Activated CD8-positive, alpha-beta T cell treated with anti-CD3 and anti-CD28 coated beads for 36 hours (primary cell): ENCODE measurements at regions of chr11 and their contacts with region 1.

Region 1: GRCh38 chr11:2885676-2886081 is at the start of gene CDKN1C:
- DNase-seq: peak; percentile 83
- ATAC-seq: peak; percentile 87
- H3K4me3 Mint-ChIP-seq: peak within 1 kb of the TSS; percentile 76
- H3K27ac Mint-ChIP-seq: no peak within 1 kb of the TSS
- H3K4me1 Mint-ChIP-seq: peaks cover 4% of the 10 kb centered on the region
- H3K27me3 Mint-ChIP-seq: peaks cover 5% of the 10 kb centered on the region
- CTCF ChIP-seq: no peak
- total RNA-seq, gene CDKN1C: 1.6 TPM

Region 2: GRCh38 chr11:2428322-2428795 is 457.3 kb before region 1 on chr11:
- CTCF ChIA-PET with region 1: interaction called, 8 read pairs
- POLR2A ChIA-PET with region 1: no interaction called
- intact Hi-C with region 1: loop called (anchors 5 kb)
- DNase-seq: peak; percentile 82
- ATAC-seq: peak; percentile 87
- H3K4me3 Mint-ChIP-seq: no peak overlapping the region
- H3K27ac Mint-ChIP-seq: no peak overlapping the region
- H3K4me1 Mint-ChIP-seq: no peaks in the 10 kb centered on the region
- H3K27me3 Mint-ChIP-seq: no peaks in the 10 kb centered on the region
- CTCF ChIP-seq: peak; percentile 75

Region 3: GRCh38 chr11:2666401-2666741 is 219.3 kb before region 1 on chr11:
- CTCF ChIA-PET with region 1: no interaction called
- POLR2A ChIA-PET with region 1: no interaction called
- intact Hi-C with region 1: no loop called
- DNase-seq: no peak
- ATAC-seq: no peak
- H3K4me3 Mint-ChIP-seq: no peak overlapping the region
- H3K27ac Mint-ChIP-seq: no peak overlapping the region
- H3K4me1 Mint-ChIP-seq: peaks cover 2% of the 10 kb centered on the region
- H3K27me3 Mint-ChIP-seq: no peaks in the 10 kb centered on the region
- CTCF ChIP-seq: no peak